MCF 10A (cell line): ENCODE measurements at regions of chr9 and their contacts with region 1.

Region 1: DNA sequence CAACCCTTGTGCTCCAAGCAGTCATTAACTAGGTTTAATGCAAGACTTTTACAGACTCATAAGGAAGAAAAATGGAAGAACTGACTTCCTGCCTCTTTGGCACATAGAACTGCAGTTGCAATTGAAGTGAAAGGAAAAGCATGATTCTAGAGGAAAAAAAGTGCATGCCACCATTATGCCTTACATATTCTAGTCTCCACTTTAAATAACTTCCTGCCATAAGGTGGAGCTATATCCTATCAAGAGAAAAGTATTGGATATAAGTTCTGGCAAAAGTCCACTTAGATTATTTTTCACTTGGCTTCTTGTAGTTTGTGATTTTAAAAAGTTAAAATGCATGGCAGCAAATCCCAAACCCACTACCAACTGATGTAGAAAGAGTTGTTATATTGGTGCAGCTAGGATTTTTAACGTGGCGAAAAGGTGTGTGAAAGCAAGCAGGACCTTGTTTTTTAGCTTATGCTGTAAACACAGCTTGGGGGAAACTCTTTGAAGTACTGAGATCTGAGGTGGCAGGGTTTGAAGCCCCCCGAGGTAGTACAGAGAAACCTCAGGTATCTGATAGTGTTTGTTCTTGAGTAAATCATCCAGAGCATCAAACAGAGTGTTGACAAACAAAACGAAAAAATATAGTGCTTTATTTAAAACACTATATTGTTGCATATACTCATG is 117.9 kb downstream of the ANXA1 start:
- DNase-seq: peak; percentile 44
- H3K4me3 Mint-ChIP-seq: no peak overlapping the region
- H3K27ac Mint-ChIP-seq: no peak overlapping the region
- H3K4me1 Mint-ChIP-seq: peaks cover 8% of the 10 kb centered on the region
- H3K27me3 Mint-ChIP-seq: peaks cover 58% of the 10 kb centered on the region
- CTCF ChIP-seq: peak; percentile 36

Region 2: DNA sequence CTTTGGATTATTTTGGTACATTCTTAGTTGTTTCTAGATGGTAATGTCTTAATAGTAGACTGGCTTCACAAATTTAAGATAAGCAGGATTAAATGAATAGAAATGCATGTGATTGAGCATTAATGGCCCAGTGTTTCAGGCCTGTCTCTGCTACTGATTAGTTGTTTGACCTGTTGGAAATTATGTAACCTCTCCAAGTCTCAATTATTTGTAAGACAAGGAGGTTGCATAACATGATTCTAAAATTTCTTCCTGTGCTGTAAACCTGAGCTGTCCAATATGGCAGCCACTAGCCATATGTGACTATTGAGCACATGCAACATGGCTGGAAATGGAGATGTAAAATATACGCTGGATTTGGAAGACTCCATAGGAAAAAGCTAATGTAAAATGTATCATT is 414.2 kb before region 1 on chr9:
- CTCF ChIA-PET with region 1: no interaction called
- POLR2A ChIA-PET with region 1: no interaction called
- intact Hi-C with region 1: no loop called
- DNase-seq: no peak
- H3K4me3 Mint-ChIP-seq: no peak overlapping the region
- H3K27ac Mint-ChIP-seq: no peak overlapping the region
- H3K4me1 Mint-ChIP-seq: no peaks in the 10 kb centered on the region
- H3K27me3 Mint-ChIP-seq: no peaks in the 10 kb centered on the region
- CTCF ChIP-seq: no peak

Region 3: DNA sequence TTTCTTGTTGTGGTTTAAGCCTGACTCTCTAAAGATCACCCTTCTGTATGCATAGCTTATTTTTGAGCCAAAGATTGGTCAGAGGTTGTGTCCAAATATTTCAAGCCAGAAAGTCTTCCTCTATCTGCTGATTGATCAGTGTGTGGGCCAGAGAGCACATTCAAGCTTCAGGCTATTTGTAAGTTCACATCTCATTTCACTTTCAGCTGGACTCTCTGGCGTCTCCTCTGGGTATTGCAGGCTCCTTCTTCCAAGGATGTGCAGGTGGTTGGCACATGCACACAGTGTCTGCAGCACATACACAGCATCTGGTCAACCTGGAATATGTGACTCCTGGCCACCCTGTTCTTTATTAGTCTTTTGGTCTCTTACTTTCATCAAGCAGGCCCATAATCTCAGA is 398.2 kb after region 1 on chr9:
- CTCF ChIA-PET with region 1: interaction called, 3 read pairs
- POLR2A ChIA-PET with region 1: no interaction called
- intact Hi-C with region 1: loop called (anchors 5 kb)
- DNase-seq: peak; percentile 27
- H3K4me3 Mint-ChIP-seq: no peak overlapping the region
- H3K27ac Mint-ChIP-seq: no peak overlapping the region
- H3K4me1 Mint-ChIP-seq: no peaks in the 10 kb centered on the region
- H3K27me3 Mint-ChIP-seq: peaks cover 68% of the 10 kb centered on the region
- CTCF ChIP-seq: peak; percentile 38